Sigmoid colon (tissue), 7 donors: ENCODE measurements at regions of chr6 and their contacts with region 1.

Region 1: GRCh38 chr6:75306064-75306463 is 21.5 kb upstream of the TMEM30A start:
- DNase-seq: no peak
- H3K4me3 ChIP-seq: no peak overlapping the region
- H3K27ac ChIP-seq: peak overlapping the region in 3 of 4 donors; percentile 5 to 65 (median 53)
- H3K4me1 ChIP-seq: peaks cover 0 to 38% (median 18%) of the 10 kb centered on the region in 4 donors
- H3K27me3 ChIP-seq: no peaks in the 10 kb centered on the region
- CTCF ChIP-seq: no peak
- EP300 ChIP-seq: no peak
- POLR2A ChIP-seq: no peak

Region 2: GRCh38 chr6:75262716-75263400 is 43.2 kb before region 1 on chr6:
- intact Hi-C with region 1: no loop called
- DNase-seq: no peak
- H3K4me3 ChIP-seq: no peak overlapping the region
- H3K27ac ChIP-seq: no peak overlapping the region
- H3K4me1 ChIP-seq: peaks cover 0 to 23% (median 11%) of the 10 kb centered on the region in 4 donors
- H3K27me3 ChIP-seq: no peaks in the 10 kb centered on the region
- CTCF ChIP-seq: no peak
- EP300 ChIP-seq: no peak
- POLR2A ChIP-seq: no peak

Region 3: GRCh38 chr6:75349262-75349984 is 43.4 kb after region 1 on chr6:
- intact Hi-C with region 1: loop called (anchors 5 kb)
- DNase-seq: no peak
- H3K4me3 ChIP-seq: peak overlapping the region; percentile 6 to 41 (median 34)
- H3K27ac ChIP-seq: peak overlapping the region; percentile 49 to 84 (median 74)
- H3K4me1 ChIP-seq: peaks cover 0 to 41% (median 28%) of the 10 kb centered on the region in 4 donors
- H3K27me3 ChIP-seq: no peaks in the 10 kb centered on the region
- CTCF ChIP-seq: peak in 1 of 4 experiments; percentile 24
- EP300 ChIP-seq: no peak
- POLR2A ChIP-seq: no peak

Region 4: DNA sequence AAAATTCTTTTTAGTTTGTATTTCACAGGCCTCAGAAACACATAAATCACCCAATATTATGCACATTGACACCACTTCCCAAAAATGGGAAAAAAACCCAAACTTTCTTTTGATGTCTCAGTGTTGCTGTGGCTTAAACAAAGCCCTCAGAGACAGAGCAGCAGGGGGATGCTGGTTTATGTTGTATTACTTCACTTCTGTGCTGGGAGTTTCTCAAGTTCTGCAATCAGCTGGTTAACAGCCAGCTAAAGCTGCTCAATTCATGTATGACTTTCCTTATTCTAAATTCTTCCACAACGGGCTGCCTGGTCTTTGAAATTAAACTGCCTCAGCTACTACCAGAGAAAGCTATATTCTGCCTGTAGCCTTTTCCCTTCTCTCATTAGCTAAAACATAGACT is 182.0 kb after region 1 on chr6:
- intact Hi-C with region 1: no loop called
- DNase-seq: no peak
- H3K4me3 ChIP-seq: peak overlapping the region in 3 of 4 donors; percentile 47 to 63 (median 57)
- H3K27ac ChIP-seq: peak overlapping the region; percentile 82 to 93 (median 86)
- H3K4me1 ChIP-seq: peaks cover 0 to 68% (median 42%) of the 10 kb centered on the region in 4 donors
- H3K27me3 ChIP-seq: no peaks in the 10 kb centered on the region
- CTCF ChIP-seq: no peak
- EP300 ChIP-seq: no peak
- POLR2A ChIP-seq: no peak

Region 5: GRCh38 chr6:75498862-75499261 is 192.8 kb after region 1 on chr6:
- intact Hi-C with region 1: loop called (anchors 5 kb)
- DNase-seq: no peak
- H3K4me3 ChIP-seq: no peak overlapping the region
- H3K27ac ChIP-seq: no peak overlapping the region
- H3K4me1 ChIP-seq: peaks cover 0 to 24% (median 15%) of the 10 kb centered on the region in 4 donors
- H3K27me3 ChIP-seq: no peaks in the 10 kb centered on the region
- CTCF ChIP-seq: no peak
- EP300 ChIP-seq: no peak
- POLR2A ChIP-seq: no peak